Pancreas (tissue), 10 donors: ENCODE measurements at regions of chr16 and their contacts with region 1.

Region 1: DNA sequence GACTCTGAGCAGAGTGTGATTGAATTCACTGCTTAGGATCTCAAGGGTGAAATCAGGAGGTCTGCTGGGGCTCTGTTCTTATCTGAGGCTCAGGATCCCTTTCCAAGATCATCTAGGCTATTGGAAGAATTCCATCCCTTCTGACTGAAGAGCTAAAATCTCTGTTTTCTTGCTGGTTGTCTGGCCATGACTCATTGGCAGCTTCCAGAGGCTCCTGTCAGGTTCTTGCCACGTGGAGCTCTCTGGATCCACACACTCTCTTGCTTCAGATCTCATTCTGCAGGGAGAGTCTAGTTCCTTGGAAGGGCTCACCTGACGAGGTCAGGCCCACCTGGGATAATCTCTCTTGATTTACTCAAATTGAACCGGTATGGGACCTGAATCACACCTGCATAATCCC is 930.7 kb downstream of the CDH8 start:
- DNase-seq: no peak
- ATAC-seq: no peak
- H3K4me3 ChIP-seq: no peak overlapping the region
- H3K27ac ChIP-seq: no peak overlapping the region
- H3K4me1 ChIP-seq: no peaks in the 10 kb centered on the region
- H3K27me3 ChIP-seq: no peaks in the 10 kb centered on the region
- CTCF ChIP-seq: no peak

Region 2: GRCh38 chr16:61007694-61008093 is 97.8 kb before region 1 on chr16:
- intact Hi-C with region 1: no loop called
- DNase-seq: no peak
- ATAC-seq: no peak
- H3K4me3 ChIP-seq: no peak overlapping the region
- H3K27ac ChIP-seq: no peak overlapping the region
- H3K4me1 ChIP-seq: no peaks in the 10 kb centered on the region
- H3K27me3 ChIP-seq: no peaks in the 10 kb centered on the region
- CTCF ChIP-seq: no peak

Region 3: GRCh38 chr16:61050547-61050946 is 55.0 kb before region 1 on chr16:
- intact Hi-C with region 1: loop called in 1 of 3 experiments (anchors 10 kb)
- DNase-seq: peak in 2 of 6 donors; percentile 10 to 51
- ATAC-seq: no peak
- H3K4me3 ChIP-seq: no peak overlapping the region
- H3K27ac ChIP-seq: no peak overlapping the region
- H3K4me1 ChIP-seq: no peaks in the 10 kb centered on the region
- H3K27me3 ChIP-seq: peaks cover 0 to 4% (median 0%) of the 10 kb centered on the region in 4 donors
- CTCF ChIP-seq: no peak

Region 4: GRCh38 chr16:61148930-61149329 is 43.4 kb after region 1 on chr16:
- intact Hi-C with region 1: no loop called
- DNase-seq: no peak
- ATAC-seq: no peak
- H3K4me3 ChIP-seq: no peak overlapping the region
- H3K27ac ChIP-seq: no peak overlapping the region
- H3K4me1 ChIP-seq: no peaks in the 10 kb centered on the region
- H3K27me3 ChIP-seq: no peaks in the 10 kb centered on the region
- CTCF ChIP-seq: no peak